Motor neuron (in vitro differentiated cells): ENCODE measurements at regions of chr1 and their contacts with region 1.

Region 1: DNA sequence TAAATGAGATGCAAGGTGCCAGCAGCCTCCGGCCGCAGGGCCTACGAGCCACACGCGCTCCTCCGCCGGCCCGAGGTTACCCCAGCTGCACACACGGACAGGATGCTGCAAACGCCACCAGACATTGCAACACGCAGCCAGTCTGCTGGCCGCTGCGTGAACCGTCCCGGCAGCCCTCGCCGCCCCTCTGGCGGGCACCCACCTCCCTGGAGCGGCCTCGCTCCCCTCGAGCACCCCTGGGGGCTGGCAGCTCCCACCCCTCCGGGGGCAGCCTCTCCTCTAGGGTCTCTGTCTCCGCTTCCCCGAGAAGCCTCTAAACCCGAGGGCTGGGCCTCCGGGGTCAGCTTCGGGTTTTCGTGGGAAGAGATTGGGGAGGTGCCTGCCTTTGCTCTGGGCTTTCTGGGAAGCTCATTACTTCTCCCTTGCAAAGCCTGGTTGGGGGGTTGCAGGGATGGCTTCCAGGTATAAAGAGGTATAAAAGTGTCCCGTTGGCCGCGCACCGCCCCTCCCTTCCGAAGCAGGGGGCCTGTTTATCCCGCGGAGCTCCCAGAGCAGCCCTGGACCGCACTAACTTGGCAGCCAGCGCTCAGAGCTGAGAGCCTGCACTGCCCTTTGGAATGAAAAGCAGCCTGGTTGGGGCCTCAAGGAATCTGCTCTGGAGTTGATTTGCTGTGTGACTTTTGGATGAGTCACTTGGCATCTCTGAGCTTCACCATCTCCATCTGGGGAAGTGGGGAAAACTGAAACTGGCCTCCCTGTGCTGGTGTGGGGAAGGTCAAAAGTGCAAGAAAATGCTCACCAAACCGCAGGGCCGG is 21.8 kb downstream of the DHRS3 start:
- ATAC-seq: peak; percentile 74 to 89 (median 84)
- H3K4me3 ChIP-seq: peak overlapping the region; percentile 18 to 43 (median 29)
- H3K27ac ChIP-seq: peak overlapping the region; percentile 96 to 98
- H3K4me1 ChIP-seq: peaks cover 65 to 75% of the 10 kb centered on the region in 2 donors

Region 2: GRCh38 chr1:12113433-12114339 is 482.5 kb before region 1 on chr1:
- in situ Hi-C with region 1: no loop called
- ATAC-seq: peak in 3 of 8 experiments; percentile 30 to 70 (median 60)
- H3K4me3 ChIP-seq: no peak overlapping the region
- H3K27ac ChIP-seq: no peak overlapping the region
- H3K4me1 ChIP-seq: no peaks in the 10 kb centered on the region

Region 3: GRCh38 chr1:12477936-12478611 is 118.1 kb before region 1 on chr1:
- in situ Hi-C with region 1: loop called in 1 of 9 experiments (anchors 25 kb)
- ATAC-seq: peak; percentile 84 to 94 (median 92)
- H3K4me3 ChIP-seq: no peak overlapping the region
- H3K27ac ChIP-seq: peak overlapping the region; percentile 81 to 85
- H3K4me1 ChIP-seq: peaks cover 65 to 76% of the 10 kb centered on the region in 2 donors

Region 4: GRCh38 chr1:13619909-13620308 is 1023.7 kb after region 1 on chr1:
- in situ Hi-C with region 1: no loop called
- ATAC-seq: peak in 4 of 8 experiments; percentile 36 to 70 (median 58)
- H3K4me3 ChIP-seq: no peak overlapping the region
- H3K27ac ChIP-seq: no peak overlapping the region
- H3K4me1 ChIP-seq: no peaks in the 10 kb centered on the region